ENCODE measurements at regions of chr9 and their contacts with region 1.

Region 1: DNA sequence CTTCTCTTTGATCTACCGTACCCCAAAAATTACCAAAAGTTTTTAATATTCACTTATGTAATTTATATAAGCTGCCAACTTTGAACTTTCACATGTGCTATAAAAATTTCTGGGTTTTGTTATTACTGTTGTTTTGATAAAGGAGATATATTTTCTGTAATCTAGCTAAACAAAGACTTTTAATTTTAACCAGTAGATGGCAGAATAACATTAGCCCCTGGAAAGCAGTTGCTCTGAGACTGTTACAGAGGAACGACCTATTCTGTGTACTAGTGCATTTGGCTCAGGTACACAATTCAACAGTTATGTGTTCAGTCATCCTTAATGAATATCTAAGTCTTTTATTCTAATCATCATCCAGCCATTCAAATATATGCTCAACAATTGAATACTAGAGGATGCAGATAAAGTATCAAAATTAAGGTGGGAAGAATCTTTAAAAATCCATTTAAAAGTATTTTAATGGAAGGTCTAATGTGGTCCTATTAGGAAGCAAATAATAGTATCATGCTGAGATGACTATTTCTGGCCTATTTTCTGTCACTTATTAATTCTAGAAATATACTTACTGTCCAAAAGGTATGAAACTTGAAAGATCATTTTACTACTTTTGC is 8.6 kb downstream of the KLHL9 start:
- DNase-seq: peak; percentile 18 to 59 (median 38)
- H3K4me3 ChIP-seq: no peak overlapping the region
- H3K4me3 Mint-ChIP-seq: no peak overlapping the region
- H3K27ac ChIP-seq: no peak overlapping the region
- H3K27ac Mint-ChIP-seq: no peak overlapping the region
- H3K4me1 ChIP-seq: peaks cover 0 to 8% of the 10 kb centered on the region in 2 donors
- H3K4me1 Mint-ChIP-seq: peaks cover 48% of the 10 kb centered on the region
- H3K27me3 ChIP-seq: no peaks in the 10 kb centered on the region
- H3K27me3 Mint-ChIP-seq: no peaks in the 10 kb centered on the region
- CTCF ChIP-seq: peak; percentile 79

Region 2: GRCh38 chr9:21252721-21253547 is 73.7 kb before region 1 on chr9:
- intact Hi-C with region 1: loop called in 1 of 2 experiments (anchors 10 kb)
- DNase-seq: peak; percentile 36 to 62 (median 46)
- H3K4me3 ChIP-seq: peak overlapping the region in 1 of 3 experiments; percentile 21
- H3K4me3 Mint-ChIP-seq: peak overlapping the region in 1 of 2 donors; percentile 59
- H3K27ac ChIP-seq: no peak overlapping the region
- H3K27ac Mint-ChIP-seq: peak overlapping the region in 3 of 7 donors; percentile 14 to 72 (median 22)
- H3K4me1 ChIP-seq: peaks cover 22 to 23% of the 10 kb centered on the region in 2 donors
- H3K4me1 Mint-ChIP-seq: peaks cover 34% of the 10 kb centered on the region
- H3K27me3 ChIP-seq: peaks cover 8 to 18% of the 10 kb centered on the region in 2 donors
- H3K27me3 Mint-ChIP-seq: peaks cover 7 to 22% (median 21%) of the 10 kb centered on the region in 3 donors
- CTCF ChIP-seq: peak; percentile 76

Region 3: DNA sequence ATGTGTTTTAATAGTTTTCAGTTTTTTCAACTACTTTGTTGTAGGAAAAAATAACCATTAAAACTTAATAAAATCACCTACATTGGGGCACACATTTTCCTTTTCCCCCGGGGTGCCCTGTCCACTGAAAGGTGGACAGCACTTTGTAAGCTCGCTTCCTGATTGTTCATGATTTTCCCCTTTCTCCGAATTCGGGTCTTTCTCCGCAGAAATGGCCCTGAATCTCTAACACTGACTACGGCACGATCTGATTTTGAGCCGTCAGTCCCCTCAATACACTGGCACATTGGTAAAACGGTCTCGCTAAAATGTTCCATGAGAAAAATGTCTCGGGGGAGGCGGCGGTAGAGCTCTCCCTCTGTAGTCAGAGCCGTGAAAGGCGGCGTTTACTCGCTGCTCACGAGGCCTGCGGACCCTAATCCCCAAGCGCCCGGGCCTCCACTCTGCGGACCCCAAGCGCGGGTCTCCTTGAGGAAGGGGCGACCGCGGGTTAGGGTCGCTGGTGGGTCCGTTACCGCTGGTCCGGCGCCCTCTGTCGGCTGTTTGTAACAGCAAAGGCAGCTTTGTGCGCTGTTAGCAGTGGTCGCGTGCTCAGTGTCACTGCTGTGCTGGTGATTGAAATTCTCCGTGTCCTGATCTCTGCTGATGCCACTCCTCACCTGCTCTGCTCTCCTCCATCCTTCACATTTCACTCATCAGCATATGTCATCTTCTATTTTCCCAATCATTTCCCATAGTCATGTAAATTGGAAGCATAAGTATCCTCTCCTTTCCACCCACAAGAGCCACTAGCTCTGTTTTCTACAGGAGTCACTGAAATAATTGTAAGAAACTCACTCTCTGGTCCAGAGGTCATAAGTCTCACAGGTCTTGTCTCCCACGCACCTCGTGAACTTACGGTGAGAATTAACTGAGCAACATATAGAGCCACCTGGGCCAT is 69.4 kb after region 1 on chr9:
- intact Hi-C with region 1: loop called in 1 of 2 experiments (anchors 10 kb)
- DNase-seq: peak in 2 of 3 donors; percentile 31 to 46
- H3K4me3 ChIP-seq: peak overlapping the region; percentile 37 to 78 (median 38)
- H3K4me3 Mint-ChIP-seq: peak overlapping the region; percentile 76 to 98
- H3K27ac ChIP-seq: no peak overlapping the region
- H3K27ac Mint-ChIP-seq: peak overlapping the region in 1 of 7 donors; percentile 1
- H3K4me1 ChIP-seq: peaks cover 8 to 10% of the 10 kb centered on the region in 2 donors
- H3K4me1 Mint-ChIP-seq: peaks cover 10% of the 10 kb centered on the region
- H3K27me3 ChIP-seq: peaks cover 77 to 91% of the 10 kb centered on the region in 2 donors
- H3K27me3 Mint-ChIP-seq: peaks cover 66 to 87% (median 78%) of the 10 kb centered on the region in 3 donors
- CTCF ChIP-seq: peak; percentile 85

Region 4: GRCh38 chr9:21455320-21455719 is 128.7 kb after region 1 on chr9:
- intact Hi-C with region 1: loop called in 1 of 2 experiments (anchors 10 kb)
- DNase-seq: peak; percentile 8 to 45 (median 33)
- H3K4me3 ChIP-seq: no peak overlapping the region
- H3K4me3 Mint-ChIP-seq: no peak overlapping the region
- H3K27ac ChIP-seq: no peak overlapping the region
- H3K27ac Mint-ChIP-seq: no peak overlapping the region
- H3K4me1 ChIP-seq: no peaks in the 10 kb centered on the region
- H3K4me1 Mint-ChIP-seq: peaks cover 2% of the 10 kb centered on the region
- H3K27me3 ChIP-seq: peaks cover 0 to 2% of the 10 kb centered on the region in 2 donors
- H3K27me3 Mint-ChIP-seq: peaks cover 2 to 6% (median 2%) of the 10 kb centered on the region in 3 donors
- CTCF ChIP-seq: peak; percentile 81

Region 5: GRCh38 chr9:21634951-21635350 is 308.3 kb after region 1 on chr9:
- intact Hi-C with region 1: no loop called
- DNase-seq: no peak
- H3K4me3 ChIP-seq: no peak overlapping the region
- H3K4me3 Mint-ChIP-seq: no peak overlapping the region
- H3K27ac ChIP-seq: no peak overlapping the region
- H3K27ac Mint-ChIP-seq: no peak overlapping the region
- H3K4me1 ChIP-seq: no peaks in the 10 kb centered on the region
- H3K4me1 Mint-ChIP-seq: no peaks in the 10 kb centered on the region
- H3K27me3 ChIP-seq: no peaks in the 10 kb centered on the region
- H3K27me3 Mint-ChIP-seq: peaks cover 3 to 10% (median 5%) of the 10 kb centered on the region in 3 donors
- CTCF ChIP-seq: no peak